ENCODE measurements at regions of chr17 and their contacts with region 1.

Region 1: GRCh38 chr17:42394838-42395237 is 6.6 kb upstream of the STAT3 start:
- DNase-seq: no peak
- CTCF ChIP-seq: no peak

Region 2: GRCh38 chr17:42405963-42406495 is 11.2 kb after region 1 on chr17:
- CTCF ChIA-PET with region 1: interaction called, 32 read pairs
- POLR2A ChIA-PET with region 1: interaction called, 3 read pairs
- DNase-seq: peak; percentile 82
- CTCF ChIP-seq: peak; percentile 95

Measured in GM10248 (cell line).